ENCODE measurements at regions of chr10 and their contacts with region 1.

Region 1: DNA sequence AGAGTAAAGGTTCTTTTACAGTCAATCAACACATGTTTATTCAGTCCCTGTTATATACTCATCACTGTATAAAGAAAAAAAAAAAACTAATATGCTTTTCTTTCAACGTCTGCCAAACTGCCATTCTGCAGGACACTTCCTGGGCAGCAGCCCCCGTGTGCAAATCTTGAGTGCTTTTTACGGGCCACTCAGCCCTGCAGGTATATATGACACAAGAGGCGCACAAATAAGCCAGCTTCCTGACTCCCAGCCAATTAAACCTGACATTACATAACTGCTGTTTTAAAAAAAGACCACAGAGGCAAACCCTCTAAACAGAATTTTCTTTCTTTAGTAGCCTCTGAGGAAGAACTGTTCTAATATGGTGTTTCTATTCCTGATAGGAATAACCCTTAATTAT is 263.0 kb upstream of the NEBL start:
- DNase-seq: no peak
- H3K4me3 ChIP-seq: no peak overlapping the region
- H3K27ac ChIP-seq: no peak overlapping the region
- H3K4me1 ChIP-seq: peaks cover 0 to 3% (median 3%) of the 10 kb centered on the region in 4 experiments; a peak in 2 of 7 replicates
- H3K27me3 ChIP-seq: no peaks in the 10 kb centered on the region
- CTCF ChIP-seq: no peak
- EP300 ChIP-seq: no peak
- POLR2A ChIP-seq: no peak
- RAD21 ChIP-seq: no peak

Region 2: DNA sequence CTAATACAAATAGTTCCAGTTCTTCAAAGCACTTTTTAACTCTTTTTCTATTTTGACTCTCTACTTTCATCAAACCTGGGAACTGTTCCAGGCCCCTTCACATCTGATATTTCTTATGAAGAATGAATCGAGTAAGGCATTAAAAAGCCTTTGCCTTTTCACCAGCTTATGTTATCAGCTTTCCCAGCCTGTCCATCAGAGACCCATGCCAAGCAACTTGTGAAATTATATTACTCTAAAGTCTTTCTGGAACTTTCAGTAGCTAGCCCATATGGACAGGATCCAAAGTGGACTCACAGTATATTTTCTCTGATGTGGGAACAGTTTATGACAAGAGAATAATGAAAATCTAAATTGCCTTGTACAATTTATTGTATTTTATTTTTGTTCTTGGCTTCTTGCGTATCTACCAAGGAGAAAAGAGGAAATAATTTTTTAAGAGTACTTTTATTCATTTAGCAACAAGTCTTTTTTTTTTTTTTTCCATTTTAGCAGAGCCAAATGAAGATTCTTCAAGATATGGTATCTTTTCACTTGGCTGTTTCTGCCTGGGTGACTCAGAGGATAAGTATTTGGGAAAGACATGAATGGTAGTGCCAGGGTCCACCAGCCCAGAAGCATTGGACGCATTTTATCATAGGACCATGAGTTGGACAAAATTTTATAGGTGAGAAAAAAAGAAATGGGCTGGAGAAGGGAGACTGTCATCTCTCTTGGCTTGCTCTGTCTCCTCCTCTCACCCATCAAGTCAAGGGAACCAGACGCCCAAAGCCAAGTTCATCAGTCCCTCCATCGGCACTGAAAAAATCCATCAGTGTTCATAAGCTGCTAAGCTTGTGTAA is 67.2 kb before region 1 on chr10:
- CTCF ChIA-PET with region 1: no interaction called
- POLR2A ChIA-PET with region 1: no interaction called
- DNase-seq: no peak
- H3K4me3 ChIP-seq: no peak overlapping the region
- H3K27ac ChIP-seq: no peak overlapping the region
- H3K4me1 ChIP-seq: no peaks in the 10 kb centered on the region
- H3K27me3 ChIP-seq: no peaks in the 10 kb centered on the region; a peak in 1 of 7 replicates
- CTCF ChIP-seq: no peak
- EP300 ChIP-seq: no peak
- POLR2A ChIP-seq: no peak
- RAD21 ChIP-seq: no peak

Region 3: DNA sequence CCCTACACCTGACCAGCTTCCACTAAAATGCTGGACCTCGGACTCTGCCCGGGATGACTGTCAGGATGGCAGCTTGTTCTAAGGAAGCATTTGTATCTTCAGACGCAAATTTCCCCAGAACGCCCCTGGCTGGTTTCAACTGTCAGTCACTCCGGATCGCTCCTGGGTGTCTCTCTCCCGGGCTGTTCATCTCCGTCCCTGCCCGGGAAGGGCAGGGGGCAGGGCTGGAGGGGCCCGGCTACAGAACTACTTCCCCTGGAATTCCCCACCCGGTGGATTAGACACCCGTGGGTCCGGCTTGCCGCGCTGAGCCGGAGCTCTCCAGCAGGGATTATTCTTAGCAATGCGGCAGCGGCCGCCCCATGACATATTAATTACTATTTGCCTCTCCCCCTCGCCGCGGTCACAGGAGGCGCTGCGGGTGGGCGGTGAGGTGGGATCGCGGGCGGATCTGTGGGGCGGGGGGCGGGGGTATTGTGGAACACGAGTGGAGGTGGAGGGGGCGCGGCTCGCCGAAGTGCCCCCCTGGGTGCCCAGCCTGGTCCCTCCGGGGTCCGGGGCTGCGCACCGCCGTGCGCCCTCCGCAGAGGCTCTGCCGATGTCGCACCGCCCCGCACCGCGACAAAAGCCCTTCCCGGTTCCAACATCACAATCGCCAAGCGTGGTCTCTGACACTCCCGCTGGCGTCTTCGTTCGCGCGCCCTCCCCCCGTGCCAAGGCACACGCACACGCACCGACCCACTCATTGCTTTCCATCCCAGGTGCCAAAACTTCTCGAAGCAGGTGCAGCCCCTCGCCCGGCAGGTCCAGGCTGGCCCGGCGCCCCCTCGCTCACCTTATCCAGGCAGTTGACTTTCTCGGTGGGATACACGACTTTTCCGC is 13.1 kb after region 1 on chr10:
- CTCF ChIA-PET with region 1: interaction called, 21 read pairs
- POLR2A ChIA-PET with region 1: interaction called, 5 read pairs
- DNase-seq: peak in 1 of 2 experiments; percentile 51
- H3K4me3 ChIP-seq: peak overlapping the region; percentile 59 to 82 (median 66)
- H3K27ac ChIP-seq: no peak overlapping the region
- H3K4me1 ChIP-seq: peaks cover 0 to 6% (median 3%) of the 10 kb centered on the region in 4 experiments; a peak in 4 of 7 replicates
- H3K27me3 ChIP-seq: peaks cover 0 to 18% (median 11%) of the 10 kb centered on the region in 4 experiments; a peak in 6 of 7 replicates
- CTCF ChIP-seq: no peak
- EP300 ChIP-seq: no peak
- POLR2A ChIP-seq: no peak
- RAD21 ChIP-seq: no peak